Activated naive CD8-positive, alpha-beta T cell treated with anti-CD3 and anti-CD28 coated beads, Interleukin-2, amount 10 ng/mL, durations not matched to agents 7 days and 5 days (primary cell): ENCODE measurements at regions of chr3 and their contacts with region 1.

Region 1: DNA sequence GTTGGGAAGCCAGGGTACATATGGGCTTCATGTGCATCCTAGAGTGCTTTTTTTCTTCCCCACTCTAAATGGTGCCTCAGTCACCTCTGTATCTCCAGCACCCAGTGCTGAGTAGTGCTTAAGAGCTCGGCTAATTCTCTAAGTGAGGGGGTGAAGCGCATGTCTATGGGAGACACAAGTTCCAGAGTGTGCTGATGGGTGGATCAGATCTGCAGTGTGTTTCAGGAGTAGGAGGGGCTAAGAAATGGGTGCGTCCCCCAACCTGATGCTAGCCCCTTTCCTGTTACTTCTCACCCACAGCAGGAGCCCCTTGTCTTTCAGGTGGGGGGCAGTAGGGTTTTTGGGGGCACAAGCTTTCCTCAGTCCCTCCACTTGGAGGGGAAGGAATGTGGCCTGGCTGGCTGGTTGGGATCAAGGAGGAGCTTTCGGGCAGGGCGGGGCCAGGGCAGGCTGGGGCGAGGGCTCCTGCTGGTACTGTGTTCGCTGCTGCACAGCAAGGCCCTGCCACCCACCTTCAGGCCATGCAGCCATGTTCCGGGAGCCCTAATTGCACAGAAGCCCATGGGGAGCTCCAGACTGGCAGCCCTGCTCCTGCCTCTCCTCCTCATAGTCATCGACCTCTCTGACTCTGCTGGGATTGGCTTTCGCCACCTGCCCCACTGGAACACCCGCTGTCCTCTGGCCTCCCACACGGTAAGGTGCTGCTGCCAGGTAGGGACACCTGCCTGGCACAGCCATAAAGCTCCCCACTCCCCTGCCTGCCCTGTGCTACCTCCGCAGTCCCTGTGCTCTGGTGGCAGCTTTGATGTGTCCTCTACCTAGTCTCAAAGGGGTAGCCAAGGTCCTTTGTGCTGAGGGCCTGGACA is at the start of gene IL17RE:
- DNase-seq: no peak
- ATAC-seq: peak; percentile 69
- H3K4me3 Mint-ChIP-seq: peak within 1 kb of the TSS; percentile 58
- H3K27ac Mint-ChIP-seq: peak within 1 kb of the TSS; percentile 64
- H3K4me1 Mint-ChIP-seq: peaks cover 32% of the 10 kb centered on the region
- H3K27me3 Mint-ChIP-seq: no peaks in the 10 kb centered on the region
- total RNA-seq, gene IL17RE: 0.94 to 1.1 TPM

Region 2: DNA sequence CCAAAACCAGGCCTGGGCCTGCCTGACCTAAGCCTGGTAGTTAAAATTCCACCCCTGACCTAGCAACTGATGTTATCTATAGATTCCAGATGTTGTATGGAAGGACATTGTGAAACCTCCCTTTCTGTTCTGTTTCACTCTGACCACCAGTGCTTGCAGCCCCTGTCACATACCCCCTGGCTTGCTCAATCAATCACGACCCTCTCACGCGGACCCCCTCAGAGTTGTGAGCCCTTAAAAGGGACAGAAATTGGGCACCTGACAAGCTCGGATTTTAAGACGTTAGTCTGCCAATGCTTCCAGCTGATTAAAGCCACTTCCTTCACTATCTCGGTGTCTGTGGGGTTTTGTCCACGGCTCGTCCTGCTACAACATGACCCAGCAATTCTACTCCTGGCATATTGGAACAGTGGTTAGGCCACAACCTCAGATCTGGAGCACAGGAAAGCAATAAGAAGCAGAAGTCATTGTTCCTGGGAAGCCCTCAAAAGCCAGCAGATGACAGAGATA is 312.3 kb before region 1 on chr3:
- POLR2A ChIA-PET with region 1: no interaction called
- DNase-seq: no peak
- ATAC-seq: no peak
- H3K4me3 Mint-ChIP-seq: no peak overlapping the region
- H3K27ac Mint-ChIP-seq: no peak overlapping the region
- H3K4me1 Mint-ChIP-seq: peaks cover 3% of the 10 kb centered on the region
- H3K27me3 Mint-ChIP-seq: peaks cover 6% of the 10 kb centered on the region

Region 3: GRCh38 chr3:9890249-9891071 is 12.1 kb before region 1 on chr3 and contains the start of gene JAGN1:
- POLR2A ChIA-PET with region 1: interaction called, 32 read pairs
- DNase-seq: peak; percentile 90
- ATAC-seq: peak; percentile 86
- H3K4me3 Mint-ChIP-seq: peak within 1 kb of the TSS; percentile 97
- H3K27ac Mint-ChIP-seq: peak within 1 kb of the TSS; percentile 99
- H3K4me1 Mint-ChIP-seq: peaks cover 35% of the 10 kb centered on the region
- H3K27me3 Mint-ChIP-seq: no peaks in the 10 kb centered on the region
- total RNA-seq, gene JAGN1: 31.5 to 34.2 TPM